AG04449 (cell line): ENCODE measurements at regions of chr9 and their contacts with region 1.

Region 1: GRCh38 chr9:34603610-34604231 is 8.2 kb downstream of the RPP25L start:
- DNase-seq: no peak
- H3K4me3 ChIP-seq: no peak overlapping the region
- CTCF ChIP-seq: peak; percentile 88

Region 2: GRCh38 chr9:34376596-34377403 is 226.9 kb before region 1 on chr9 and contains the start of gene MYORG:
- CTCF ChIA-PET with region 1: interaction called, 14 read pairs
- POLR2A ChIA-PET with region 1: no interaction called
- DNase-seq: no peak
- H3K4me3 ChIP-seq: peak within 1 kb of the TSS; percentile 74
- CTCF ChIP-seq: no peak

Region 3: DNA sequence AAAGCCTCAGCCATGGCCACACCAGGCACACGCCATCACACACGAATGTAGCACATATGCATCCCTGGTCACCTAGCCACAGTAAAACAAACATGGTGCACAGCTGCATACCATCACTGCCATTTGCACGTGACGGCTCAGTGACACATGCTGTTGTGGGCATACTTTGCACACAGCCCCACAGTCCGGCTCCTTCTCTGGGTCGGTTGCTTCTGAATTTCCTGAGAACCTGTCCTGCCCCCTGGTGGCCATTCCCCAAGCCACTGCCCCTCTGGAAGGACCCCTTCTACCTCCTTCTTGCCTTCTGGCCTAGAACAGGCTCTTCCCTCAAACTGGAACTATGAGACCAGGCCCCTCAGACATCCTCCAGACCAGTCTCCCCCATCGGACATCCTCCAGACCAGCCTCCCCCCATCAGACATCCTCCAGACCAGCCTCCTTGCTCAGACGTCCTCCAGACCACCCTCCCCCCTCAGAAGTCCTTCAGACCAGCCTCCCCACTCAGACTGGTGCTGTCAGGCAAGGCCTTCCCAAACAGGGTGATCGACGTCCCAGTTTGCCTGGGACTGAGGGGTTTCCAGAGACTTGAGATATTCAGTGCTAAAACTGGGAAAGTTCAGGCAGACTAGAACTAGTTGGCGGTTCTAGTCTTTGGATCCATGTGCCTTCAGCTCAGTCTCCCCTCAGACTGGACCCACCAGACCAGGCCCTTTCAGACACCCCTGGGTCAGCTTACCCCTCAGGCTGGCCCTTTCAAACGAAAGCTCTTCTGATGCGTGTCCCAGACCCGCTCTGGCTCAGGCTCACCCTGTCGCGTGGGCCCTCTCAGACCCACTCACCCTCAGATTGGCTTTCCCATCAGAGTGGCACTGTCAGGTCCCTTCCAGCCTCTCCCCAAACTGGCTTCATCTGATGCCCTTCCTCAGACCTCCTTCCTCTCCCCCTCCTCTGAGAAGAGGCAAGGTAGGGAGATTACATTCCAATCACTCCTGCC is 56.6 kb before region 1 on chr9:
- CTCF ChIA-PET with region 1: interaction called, 255 read pairs
- POLR2A ChIA-PET with region 1: no interaction called
- DNase-seq: no peak
- H3K4me3 ChIP-seq: no peak overlapping the region
- CTCF ChIP-seq: peak; percentile 60

Region 4: DNA sequence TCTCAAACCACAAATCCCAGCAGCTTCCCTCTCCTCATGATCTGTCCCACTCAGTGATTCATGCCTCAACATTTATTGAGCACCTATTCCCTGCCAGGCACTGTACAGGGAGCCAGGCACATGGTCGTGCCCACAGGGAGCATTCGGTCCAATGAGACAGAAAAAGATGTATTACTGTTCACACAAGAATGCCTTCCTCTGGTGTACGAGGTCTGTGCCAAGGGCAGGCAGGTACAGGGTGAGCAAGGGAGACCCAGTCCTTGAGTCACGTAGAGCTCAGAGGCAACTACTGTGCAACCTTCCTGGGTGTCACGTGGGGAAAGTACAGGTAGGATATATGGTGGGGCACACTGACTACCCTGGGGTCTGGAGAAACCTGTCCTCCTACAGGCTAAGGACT is 18.8 kb before region 1 on chr9:
- CTCF ChIA-PET with region 1: interaction called, 15 read pairs
- POLR2A ChIA-PET with region 1: no interaction called
- DNase-seq: no peak
- H3K4me3 ChIP-seq: no peak overlapping the region
- CTCF ChIP-seq: no peak

Region 5: GRCh38 chr9:34637356-34638137 is 33.8 kb after region 1 on chr9 and contains the start of gene SIGMAR1:
- CTCF ChIA-PET with region 1: interaction called, 65 read pairs
- POLR2A ChIA-PET with region 1: no interaction called
- DNase-seq: no peak
- H3K4me3 ChIP-seq: peak within 1 kb of the TSS; percentile 80
- CTCF ChIP-seq: no peak